ENCODE measurements at regions of chr16 and their contacts with region 1.

Region 1: DNA sequence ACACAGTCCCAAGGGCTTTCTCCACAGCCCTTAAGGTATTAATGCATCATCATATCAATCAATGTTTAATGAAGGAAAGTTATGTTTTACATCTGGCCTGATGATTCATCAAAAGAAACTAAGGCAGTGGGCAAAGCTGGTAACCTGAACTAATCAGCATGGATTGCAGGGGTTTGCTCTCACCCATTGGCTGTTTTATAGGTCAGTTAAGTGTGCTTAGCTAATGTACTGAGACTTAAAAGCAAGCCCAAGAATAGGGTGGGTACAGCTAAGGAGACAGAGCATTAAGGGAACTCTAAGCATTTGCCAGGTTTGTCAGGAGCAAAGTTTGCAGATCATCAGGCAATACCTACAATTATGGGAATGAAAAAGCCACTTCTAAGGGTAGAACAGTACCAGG is 1247.6 kb downstream of the CDH8 start:
- DNase-seq: no peak
- ATAC-seq: no peak
- H3K4me3 ChIP-seq: no peak overlapping the region
- H3K27ac ChIP-seq: no peak overlapping the region
- H3K4me1 ChIP-seq: no peaks in the 10 kb centered on the region
- H3K27me3 ChIP-seq: no peaks in the 10 kb centered on the region
- CTCF ChIP-seq: no peak
- POLR2A ChIP-seq: no peak

Region 2: GRCh38 chr16:60419859-60420258 is 368.8 kb before region 1 on chr16:
- intact Hi-C with region 1: no loop called
- DNase-seq: no peak
- ATAC-seq: no peak
- H3K4me3 ChIP-seq: no peak overlapping the region
- H3K27ac ChIP-seq: no peak overlapping the region
- H3K4me1 ChIP-seq: no peaks in the 10 kb centered on the region
- H3K27me3 ChIP-seq: no peaks in the 10 kb centered on the region
- CTCF ChIP-seq: no peak
- POLR2A ChIP-seq: no peak

Region 3: GRCh38 chr16:60586493-60586892 is 202.1 kb before region 1 on chr16:
- intact Hi-C with region 1: no loop called
- DNase-seq: no peak
- ATAC-seq: no peak
- H3K4me3 ChIP-seq: no peak overlapping the region
- H3K27ac ChIP-seq: no peak overlapping the region
- H3K4me1 ChIP-seq: no peaks in the 10 kb centered on the region
- H3K27me3 ChIP-seq: no peaks in the 10 kb centered on the region
- CTCF ChIP-seq: no peak
- POLR2A ChIP-seq: no peak

Region 4: DNA sequence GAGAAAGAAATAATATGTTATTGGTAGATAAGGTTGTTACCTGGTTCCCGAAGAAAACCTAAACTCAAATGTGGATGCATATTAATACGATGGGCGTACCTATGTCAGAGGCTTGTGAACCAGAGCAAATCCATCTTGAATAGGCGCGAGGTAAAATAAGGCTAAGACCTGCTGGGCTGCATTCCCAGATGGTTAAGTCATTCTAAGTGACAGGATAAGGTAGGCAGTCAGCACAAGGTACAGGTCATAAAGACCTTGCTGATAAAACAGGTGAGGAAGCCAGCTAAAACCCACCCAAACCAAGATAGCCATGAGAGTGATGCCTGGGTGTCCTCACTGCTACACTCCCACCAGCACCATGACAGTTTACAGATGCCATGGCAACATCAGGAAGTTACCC is 152.5 kb before region 1 on chr16:
- intact Hi-C with region 1: loop called in 1 of 10 experiments (anchors 10 kb)
- DNase-seq: no peak
- ATAC-seq: no peak
- H3K4me3 ChIP-seq: no peak overlapping the region
- H3K27ac ChIP-seq: no peak overlapping the region
- H3K4me1 ChIP-seq: no peaks in the 10 kb centered on the region
- H3K27me3 ChIP-seq: no peaks in the 10 kb centered on the region
- CTCF ChIP-seq: no peak
- POLR2A ChIP-seq: no peak

Region 5: GRCh38 chr16:60771138-60771537 is 17.5 kb before region 1 on chr16:
- intact Hi-C with region 1: loop called in 1 of 10 experiments (anchors 2 kb)
- DNase-seq: no peak
- ATAC-seq: no peak
- H3K4me3 ChIP-seq: no peak overlapping the region
- H3K27ac ChIP-seq: no peak overlapping the region
- H3K4me1 ChIP-seq: no peaks in the 10 kb centered on the region
- H3K27me3 ChIP-seq: no peaks in the 10 kb centered on the region
- CTCF ChIP-seq: no peak
- POLR2A ChIP-seq: no peak

Region 6: GRCh38 chr16:60821661-60822060 is 33.0 kb after region 1 on chr16:
- intact Hi-C with region 1: no loop called
- DNase-seq: no peak
- ATAC-seq: no peak
- H3K4me3 ChIP-seq: no peak overlapping the region
- H3K27ac ChIP-seq: no peak overlapping the region
- H3K4me1 ChIP-seq: no peaks in the 10 kb centered on the region
- H3K27me3 ChIP-seq: no peaks in the 10 kb centered on the region
- CTCF ChIP-seq: no peak
- POLR2A ChIP-seq: no peak